ENCODE measurements at regions of chr9 and their contacts with region 1.

Region 1: DNA sequence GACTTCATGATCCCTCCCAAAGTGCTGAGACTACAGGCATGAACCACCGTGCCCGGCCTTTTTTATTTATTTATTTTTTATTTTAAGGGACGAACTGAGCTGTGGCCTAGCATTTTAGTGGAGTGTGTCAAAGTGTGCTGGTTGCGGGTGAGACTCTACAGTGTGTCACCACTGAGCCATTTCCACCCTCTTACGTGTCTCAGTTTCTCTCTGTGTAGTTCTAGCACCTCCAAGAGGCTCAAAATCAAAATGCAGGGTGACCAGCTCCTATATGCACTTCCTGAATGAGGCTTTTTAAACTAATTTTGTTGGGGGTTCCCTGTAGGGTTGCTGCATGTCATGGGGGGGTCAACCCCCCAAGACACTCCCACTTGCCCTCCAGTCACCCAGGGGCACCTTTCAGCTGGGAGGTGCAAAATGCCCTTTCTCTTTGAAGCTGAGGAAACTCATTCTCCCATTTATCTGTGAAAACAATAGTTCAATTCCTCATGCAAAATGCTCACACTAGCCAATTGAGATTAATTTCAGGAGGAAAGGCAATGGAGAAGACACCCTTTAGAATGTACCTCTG is 69.3 kb downstream of the COL15A1 start:
- DNase-seq: peak in 2 of 5 donors; percentile 12 to 22
- H3K4me3 ChIP-seq: no peak overlapping the region
- H3K4me3 Mint-ChIP-seq: peak overlapping the region in 7 of 8 donors; percentile 4 to 87 (median 75)
- H3K27ac ChIP-seq: no peak overlapping the region
- H3K27ac Mint-ChIP-seq: peak overlapping the region in 6 of 7 donors; percentile 35 to 90 (median 66)
- H3K4me1 ChIP-seq: peaks cover 18% of the 10 kb centered on the region
- H3K4me1 Mint-ChIP-seq: peaks cover 16 to 26% (median 20%) of the 10 kb centered on the region in 4 donors
- H3K27me3 ChIP-seq: no peaks in the 10 kb centered on the region
- H3K27me3 Mint-ChIP-seq: no peaks in the 10 kb centered on the region

Region 2: GRCh38 chr9:98614941-98615340 is 398.1 kb before region 1 on chr9:
- CTCF ChIA-PET with region 1: no interaction called
- POLR2A ChIA-PET with region 1: no interaction called
- intact Hi-C with region 1: no loop called
- DNase-seq: no peak
- H3K4me3 ChIP-seq: no peak overlapping the region
- H3K4me3 Mint-ChIP-seq: no peak overlapping the region
- H3K27ac ChIP-seq: no peak overlapping the region
- H3K27ac Mint-ChIP-seq: no peak overlapping the region
- H3K4me1 ChIP-seq: no peaks in the 10 kb centered on the region
- H3K4me1 Mint-ChIP-seq: no peaks in the 10 kb centered on the region
- H3K27me3 ChIP-seq: no peaks in the 10 kb centered on the region
- H3K27me3 Mint-ChIP-seq: peaks cover 15 to 19% of the 10 kb centered on the region in 2 donors

Region 3: GRCh38 chr9:98974994-98975712 is 37.9 kb before region 1 on chr9:
- CTCF ChIA-PET with region 1: interaction called, 15 read pairs
- POLR2A ChIA-PET with region 1: no interaction called
- intact Hi-C with region 1: no loop called
- DNase-seq: peak; percentile 61 to 74 (median 71)
- H3K4me3 ChIP-seq: peak overlapping the region in 1 of 2 donors; percentile 49
- H3K4me3 Mint-ChIP-seq: peak overlapping the region in 7 of 8 donors; percentile 30 to 62 (median 53)
- H3K27ac ChIP-seq: no peak overlapping the region
- H3K27ac Mint-ChIP-seq: no peak overlapping the region
- H3K4me1 ChIP-seq: peaks cover 10% of the 10 kb centered on the region
- H3K4me1 Mint-ChIP-seq: no peaks in the 10 kb centered on the region
- H3K27me3 ChIP-seq: no peaks in the 10 kb centered on the region
- H3K27me3 Mint-ChIP-seq: peaks cover 5% of the 10 kb centered on the region in 2 donors

Region 4: DNA sequence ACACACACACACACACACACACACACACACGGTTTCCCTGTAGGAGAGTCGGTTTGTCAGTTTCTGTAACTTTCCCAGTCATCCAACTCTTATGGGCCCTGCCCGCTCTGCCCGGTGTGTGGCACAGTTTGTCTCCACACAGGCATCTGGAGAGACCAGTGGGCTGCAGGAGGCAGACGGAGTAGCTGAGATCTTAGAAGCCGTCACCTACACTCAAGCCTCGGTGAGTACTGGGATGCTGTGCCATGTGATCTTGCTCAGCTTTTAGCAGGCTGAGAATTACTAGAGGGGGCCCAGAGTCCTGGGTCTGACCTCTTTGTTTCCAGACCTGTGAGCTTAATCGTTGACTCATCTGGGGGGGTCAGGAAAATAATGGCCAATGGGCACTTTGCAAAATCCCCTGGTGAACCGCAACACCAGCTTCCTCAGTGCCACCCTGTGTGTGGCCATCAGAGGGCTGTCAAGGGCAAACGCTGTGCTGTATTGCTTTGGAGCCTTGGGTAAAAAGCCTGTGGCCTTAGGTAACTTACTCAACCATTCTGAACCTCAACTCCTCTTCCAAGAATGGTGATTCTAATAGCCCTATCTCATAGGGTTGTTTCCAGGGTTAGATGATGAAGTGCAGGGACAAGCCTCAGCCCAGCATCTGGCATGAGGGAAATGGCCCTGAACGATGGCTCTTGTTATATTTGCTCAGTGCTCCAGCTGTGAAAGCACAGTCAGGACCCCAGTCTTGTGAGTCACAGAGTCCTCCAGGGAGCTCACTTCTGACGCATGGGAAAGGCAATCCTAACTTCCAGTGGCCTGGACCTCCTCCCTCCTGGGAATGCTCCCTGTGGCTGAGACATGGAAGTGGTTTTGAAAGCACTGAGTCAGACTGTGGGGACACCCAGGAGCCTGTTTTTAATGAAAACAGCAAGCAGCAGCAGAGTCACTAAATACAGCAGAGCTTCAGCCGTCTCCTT is 23.7 kb before region 1 on chr9:
- CTCF ChIA-PET with region 1: no interaction called
- POLR2A ChIA-PET with region 1: no interaction called
- intact Hi-C with region 1: no loop called
- DNase-seq: no peak
- H3K4me3 ChIP-seq: no peak overlapping the region
- H3K4me3 Mint-ChIP-seq: no peak overlapping the region
- H3K27ac ChIP-seq: no peak overlapping the region
- H3K27ac Mint-ChIP-seq: peak overlapping the region in 1 of 7 donors; percentile 36
- H3K4me1 ChIP-seq: no peaks in the 10 kb centered on the region
- H3K4me1 Mint-ChIP-seq: peaks cover 3 to 6% (median 5%) of the 10 kb centered on the region in 4 donors
- H3K27me3 ChIP-seq: no peaks in the 10 kb centered on the region
- H3K27me3 Mint-ChIP-seq: peaks cover 0 to 5% of the 10 kb centered on the region in 2 donors

Region 5: GRCh38 chr9:99112750-99113413 is 99.9 kb after region 1 on chr9:
- CTCF ChIA-PET with region 1: interaction called, 5 read pairs
- POLR2A ChIA-PET with region 1: interaction called, 4 read pairs
- intact Hi-C with region 1: loop called (anchors 5 kb)
- DNase-seq: peak; percentile 79 to 85 (median 80)
- H3K4me3 ChIP-seq: peak overlapping the region in 1 of 2 donors; percentile 35
- H3K4me3 Mint-ChIP-seq: peak overlapping the region; percentile 37 to 85 (median 72)
- H3K27ac ChIP-seq: peak overlapping the region; percentile 27
- H3K27ac Mint-ChIP-seq: peak overlapping the region; percentile 60 to 90 (median 79)
- H3K4me1 ChIP-seq: peaks cover 94% of the 10 kb centered on the region
- H3K4me1 Mint-ChIP-seq: peaks cover 75 to 95% (median 83%) of the 10 kb centered on the region in 4 donors
- H3K27me3 ChIP-seq: no peaks in the 10 kb centered on the region
- H3K27me3 Mint-ChIP-seq: no peaks in the 10 kb centered on the region

Region 6: GRCh38 chr9:99140685-99141314 is 127.8 kb after region 1 on chr9:
- CTCF ChIA-PET with region 1: interaction called, 480 read pairs
- POLR2A ChIA-PET with region 1: interaction called, 5 read pairs
- intact Hi-C with region 1: no loop called
- DNase-seq: peak; percentile 50 to 56 (median 53)
- H3K4me3 ChIP-seq: no peak overlapping the region
- H3K4me3 Mint-ChIP-seq: peak overlapping the region in 1 of 8 donors; percentile 21
- H3K27ac ChIP-seq: no peak overlapping the region
- H3K27ac Mint-ChIP-seq: peak overlapping the region; percentile 16 to 58 (median 43)
- H3K4me1 ChIP-seq: peaks cover 16% of the 10 kb centered on the region
- H3K4me1 Mint-ChIP-seq: peaks cover 21 to 31% (median 24%) of the 10 kb centered on the region in 4 donors
- H3K27me3 ChIP-seq: no peaks in the 10 kb centered on the region
- H3K27me3 Mint-ChIP-seq: no peaks in the 10 kb centered on the region